ENCODE measurements at regions of chr10 and their contacts with region 1.

Region 1: GRCh38 chr10:75137533-75138438 is 26.3 kb downstream of the SAMD8 start:
- DNase-seq: no peak
- H3K4me3 Mint-ChIP-seq: no peak overlapping the region
- H3K27ac Mint-ChIP-seq: peak overlapping the region; percentile 33
- H3K4me1 Mint-ChIP-seq: peaks cover 24% of the 10 kb centered on the region
- H3K27me3 Mint-ChIP-seq: no peaks in the 10 kb centered on the region

Region 2: GRCh38 chr10:74640134-74640931 is 497.5 kb before region 1 on chr10:
- intact Hi-C with region 1: no loop called
- DNase-seq: no peak
- H3K4me3 Mint-ChIP-seq: no peak overlapping the region
- H3K27ac Mint-ChIP-seq: no peak overlapping the region
- H3K4me1 Mint-ChIP-seq: no peaks in the 10 kb centered on the region
- H3K27me3 Mint-ChIP-seq: no peaks in the 10 kb centered on the region

Region 3: DNA sequence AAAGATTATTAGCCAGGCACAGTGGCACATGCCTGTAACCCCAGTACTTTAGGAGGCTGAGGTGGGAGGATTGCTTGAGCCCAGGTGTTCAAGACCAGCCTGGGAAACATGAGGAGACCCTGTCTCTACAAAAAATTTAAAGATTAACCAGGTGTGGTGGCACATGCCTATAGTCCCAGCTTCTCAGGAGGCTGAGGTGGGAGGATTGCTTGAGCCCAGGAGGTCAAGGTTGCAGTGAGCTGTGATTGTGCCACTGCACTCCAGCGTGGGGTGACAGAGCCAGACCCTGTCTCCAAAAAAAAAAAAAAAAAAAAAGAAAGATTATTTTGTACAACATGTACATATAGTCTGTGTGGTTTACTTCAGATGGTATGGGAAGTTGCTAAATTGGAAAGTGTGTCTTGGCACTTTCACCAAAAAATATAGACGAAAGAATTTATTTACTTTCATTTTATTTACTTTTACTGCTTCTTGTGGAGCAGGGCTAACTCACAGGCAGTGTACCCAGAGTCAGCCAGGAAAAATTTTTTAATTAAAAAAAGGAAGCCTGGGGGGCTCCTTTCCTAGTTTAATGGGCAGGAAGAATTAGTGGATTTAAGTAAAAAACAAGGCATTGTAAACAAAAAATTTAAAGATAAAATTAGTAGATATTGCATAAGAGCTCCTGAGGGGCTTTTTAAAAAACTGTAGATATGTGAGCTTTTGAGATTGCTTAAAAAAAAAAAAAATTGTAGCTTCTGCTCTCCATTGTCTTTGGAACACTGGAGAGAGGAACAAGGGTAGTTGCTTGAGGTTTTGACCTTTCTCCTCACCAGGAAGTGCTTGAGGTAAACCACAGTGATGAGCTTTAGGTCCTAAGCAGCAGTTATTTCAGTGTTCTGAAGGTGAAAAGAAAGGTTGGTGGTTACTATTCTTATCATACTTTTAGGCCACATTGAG is 28.2 kb after region 1 on chr10:
- intact Hi-C with region 1: loop called (anchors 2 kb)
- DNase-seq: no peak
- H3K4me3 Mint-ChIP-seq: peak overlapping the region; percentile 49
- H3K27ac Mint-ChIP-seq: peak overlapping the region; percentile 90
- H3K4me1 Mint-ChIP-seq: peaks cover 25% of the 10 kb centered on the region
- H3K27me3 Mint-ChIP-seq: no peaks in the 10 kb centered on the region